GM18951 (cell line): ENCODE measurements at regions of chr12 and their contacts with region 1.

Region 1: GRCh38 chr12:98572010-98572409 is 21.5 kb upstream of the SLC25A3 start:
- POLR2A ChIP-seq: no peak

Region 2: GRCh38 chr12:98671459-98671858 is 99.4 kb after region 1 on chr12:
- in situ Hi-C with region 1: no loop called
- POLR2A ChIP-seq: no peak

Region 3: GRCh38 chr12:98998697-98999299 is 426.8 kb after region 1 on chr12:
- in situ Hi-C with region 1: loop called (anchors 25 kb)
- POLR2A ChIP-seq: no peak

Region 4: DNA sequence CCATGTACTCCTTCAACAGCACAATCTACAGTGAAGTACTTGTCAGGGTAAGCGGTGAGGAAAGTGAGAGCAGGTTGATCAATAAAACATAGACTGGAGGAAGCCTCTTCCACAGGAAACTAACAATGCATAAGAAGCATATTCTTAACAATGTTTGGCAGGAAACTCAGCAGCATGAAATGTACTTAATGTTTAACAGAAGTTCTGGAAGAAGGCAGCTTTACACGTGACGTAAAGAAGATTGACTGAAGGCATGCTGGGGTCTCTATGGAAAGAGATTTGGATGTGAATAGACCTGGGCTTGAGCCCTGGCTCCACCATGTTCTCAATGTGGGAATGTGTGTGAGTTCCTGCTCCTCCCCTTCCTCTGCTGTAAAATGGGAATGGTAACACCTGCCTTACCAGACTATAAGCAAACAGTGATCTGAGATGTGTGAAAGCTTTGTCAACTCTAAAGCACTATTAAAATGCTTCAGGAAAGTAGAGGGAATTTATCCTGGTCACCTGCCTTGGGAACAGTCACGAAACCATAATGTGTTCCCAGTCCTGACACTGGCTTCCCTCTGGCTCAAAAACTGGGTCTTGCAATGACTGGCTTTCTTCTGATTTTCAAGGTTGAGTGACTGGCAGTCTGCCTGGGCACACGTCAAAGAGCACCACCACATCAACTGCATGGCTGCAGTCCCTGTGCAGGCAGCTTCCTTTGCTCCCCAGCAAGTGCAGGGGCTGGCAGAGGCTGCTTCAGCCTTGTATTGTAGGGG is 457.7 kb after region 1 on chr12:
- in situ Hi-C with region 1: no loop called
- POLR2A ChIP-seq: no peak